ENCODE measurements at regions of chr11 and their contacts with region 1.

Region 1: DNA sequence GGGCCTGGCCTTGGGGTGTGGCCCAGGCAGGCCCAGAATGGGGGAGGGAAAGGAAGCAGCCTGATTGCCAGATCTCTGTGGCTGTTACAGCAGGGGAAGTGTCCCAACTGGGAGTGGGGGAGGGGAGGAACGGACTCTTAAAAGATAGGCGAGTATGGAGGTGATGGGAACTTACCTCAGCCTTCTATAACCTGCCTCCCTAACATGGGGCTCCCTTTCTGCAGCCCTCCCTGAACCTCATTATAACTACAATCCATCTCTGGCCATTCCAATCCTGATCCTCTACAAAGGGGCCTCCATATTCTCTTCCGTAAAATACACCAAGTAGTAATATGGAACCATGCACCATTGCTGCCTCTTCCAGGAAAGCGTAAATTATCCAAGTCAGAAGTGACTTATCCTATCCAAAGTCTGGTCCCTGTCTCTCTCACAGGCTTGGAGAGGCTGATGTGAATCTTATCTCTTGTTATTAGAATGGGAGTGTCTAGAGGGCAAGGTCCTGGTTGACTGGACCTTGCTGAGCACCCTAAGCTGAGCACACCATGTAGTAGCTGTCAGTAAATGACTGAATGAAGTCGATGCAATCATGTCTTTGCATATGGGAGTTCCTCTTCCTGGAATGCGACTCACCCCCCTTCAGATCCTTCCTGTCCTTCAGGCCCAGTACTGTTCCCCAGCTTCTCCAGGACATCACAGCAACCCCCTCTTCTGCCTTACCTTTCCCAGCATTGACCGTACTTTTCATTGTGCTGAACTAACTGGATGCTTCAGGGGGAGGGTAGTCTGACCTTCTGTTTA is 5.9 kb downstream of the RHOG start:
- DNase-seq: peak in 1 of 2 donors; percentile 33
- ATAC-seq: peak in 1 of 3 donors; percentile 37
- H3K4me3 ChIP-seq: no peak overlapping the region
- H3K4me3 Mint-ChIP-seq: peak overlapping the region; percentile 81
- H3K27ac ChIP-seq: peak overlapping the region; percentile 84
- H3K27ac Mint-ChIP-seq: peak overlapping the region; percentile 90 to 95
- H3K4me1 ChIP-seq: peaks cover 97% of the 10 kb centered on the region
- H3K4me1 Mint-ChIP-seq: peaks cover 86 to 97% of the 10 kb centered on the region in 2 donors
- H3K27me3 ChIP-seq: no peaks in the 10 kb centered on the region
- H3K27me3 Mint-ChIP-seq: no peaks in the 10 kb centered on the region
- CTCF ChIP-seq: no peak

Region 2: DNA sequence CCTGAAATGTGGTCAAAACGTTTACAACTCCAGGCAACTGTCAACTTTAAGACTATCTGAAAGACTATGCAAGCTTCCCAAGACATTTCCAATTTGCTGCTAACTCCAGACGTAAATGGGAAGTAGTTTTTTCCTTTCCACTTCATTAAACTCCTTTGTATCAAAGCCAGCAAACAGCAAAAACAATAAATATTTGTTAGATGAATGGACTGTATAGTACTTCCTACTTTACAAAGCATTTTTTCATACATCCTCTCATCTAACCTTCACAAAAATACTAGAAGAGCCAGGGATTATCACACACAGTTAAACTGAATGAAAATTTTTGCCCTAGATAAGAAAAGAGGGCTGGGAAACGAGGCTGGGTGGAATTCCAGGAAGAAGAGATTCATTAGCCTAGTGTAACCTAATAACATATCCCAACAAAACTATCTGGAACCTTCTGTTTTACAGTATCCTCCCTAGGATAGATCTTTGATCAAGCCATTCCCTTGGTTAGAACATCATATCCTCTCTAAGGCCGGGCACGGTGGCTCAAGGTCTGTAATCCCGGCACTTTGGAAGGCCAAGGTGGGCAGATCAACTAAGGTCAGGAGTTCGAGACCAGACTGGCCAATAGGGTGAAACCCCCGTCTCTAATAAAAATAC is 48.0 kb before region 1 on chr11:
- intact Hi-C with region 1: loop called (anchors 5 kb)
- DNase-seq: no peak
- ATAC-seq: no peak
- H3K4me3 ChIP-seq: no peak overlapping the region
- H3K4me3 Mint-ChIP-seq: no peak overlapping the region
- H3K27ac ChIP-seq: peak overlapping the region; percentile 32
- H3K27ac Mint-ChIP-seq: peak overlapping the region; percentile 91 to 95
- H3K4me1 ChIP-seq: peaks cover 14% of the 10 kb centered on the region
- H3K4me1 Mint-ChIP-seq: peaks cover 51 to 53% of the 10 kb centered on the region in 2 donors
- H3K27me3 ChIP-seq: no peaks in the 10 kb centered on the region
- H3K27me3 Mint-ChIP-seq: no peaks in the 10 kb centered on the region
- CTCF ChIP-seq: no peak

Measured in natural killer cell (primary cell).